ENCODE measurements at regions of chr6 and their contacts with region 1.

Region 1: DNA sequence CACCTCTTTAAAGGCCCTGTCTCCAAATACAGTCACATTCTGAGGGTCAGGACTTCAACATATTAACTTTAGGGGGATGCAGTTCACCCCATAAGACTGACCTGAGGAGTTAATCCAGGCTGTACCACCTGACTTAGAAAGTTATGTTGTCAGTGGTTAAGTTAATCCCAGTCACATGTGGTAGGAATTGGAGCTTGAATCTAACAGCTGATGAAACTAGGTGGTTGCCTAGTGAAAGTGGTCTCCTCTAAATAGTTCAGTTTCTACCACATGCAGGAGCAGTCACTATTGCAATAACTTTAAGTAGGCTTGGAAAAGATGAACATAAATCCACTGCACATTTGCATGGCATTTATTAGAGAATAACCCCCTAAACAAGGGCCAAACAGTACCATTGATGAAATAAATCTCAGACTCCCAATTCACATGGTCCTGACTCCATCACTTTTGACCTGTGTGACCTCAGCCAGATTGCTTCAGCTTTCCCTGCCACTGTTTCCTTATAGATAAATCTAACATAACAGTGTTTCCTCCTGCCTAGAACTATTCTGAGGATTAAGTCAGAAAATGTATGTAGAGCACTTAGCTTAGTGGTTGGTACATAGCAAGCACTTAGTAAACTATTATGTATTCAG is 20.1 kb downstream of the SAMD5 start:
- DNase-seq: no peak
- ATAC-seq: no peak

Region 2: GRCh38 chr6:147604373-147604772 is 75.7 kb after region 1 on chr6:
- intact Hi-C with region 1: loop called (anchors 5 kb)
- DNase-seq: no peak
- ATAC-seq: no peak

Region 3: DNA sequence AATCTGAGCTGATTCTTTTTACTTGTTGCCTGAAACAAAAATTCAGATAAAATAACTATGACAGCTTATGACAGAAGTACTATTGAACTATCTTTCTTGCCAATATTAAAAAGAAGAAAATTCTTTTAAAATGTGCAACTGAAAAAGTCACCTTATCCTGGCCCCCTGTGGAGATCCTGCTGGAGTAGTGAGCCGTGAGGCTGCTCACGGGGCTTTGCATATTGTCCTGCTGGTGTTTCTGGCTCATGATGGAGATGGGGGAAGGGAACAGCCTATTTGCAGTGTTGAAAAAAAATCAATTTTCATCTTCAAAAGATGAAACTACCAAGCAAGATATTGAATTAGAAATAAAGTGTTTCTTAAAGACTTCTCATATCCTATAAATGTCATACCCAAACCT is 195.8 kb after region 1 on chr6:
- intact Hi-C with region 1: no loop called
- DNase-seq: no peak
- ATAC-seq: no peak

Measured in Right ventricle myocardium inferior (tissue), 1 donor.